Calu3 (cell line): ENCODE measurements at regions of chr1 and their contacts with region 1.

Region 1: DNA sequence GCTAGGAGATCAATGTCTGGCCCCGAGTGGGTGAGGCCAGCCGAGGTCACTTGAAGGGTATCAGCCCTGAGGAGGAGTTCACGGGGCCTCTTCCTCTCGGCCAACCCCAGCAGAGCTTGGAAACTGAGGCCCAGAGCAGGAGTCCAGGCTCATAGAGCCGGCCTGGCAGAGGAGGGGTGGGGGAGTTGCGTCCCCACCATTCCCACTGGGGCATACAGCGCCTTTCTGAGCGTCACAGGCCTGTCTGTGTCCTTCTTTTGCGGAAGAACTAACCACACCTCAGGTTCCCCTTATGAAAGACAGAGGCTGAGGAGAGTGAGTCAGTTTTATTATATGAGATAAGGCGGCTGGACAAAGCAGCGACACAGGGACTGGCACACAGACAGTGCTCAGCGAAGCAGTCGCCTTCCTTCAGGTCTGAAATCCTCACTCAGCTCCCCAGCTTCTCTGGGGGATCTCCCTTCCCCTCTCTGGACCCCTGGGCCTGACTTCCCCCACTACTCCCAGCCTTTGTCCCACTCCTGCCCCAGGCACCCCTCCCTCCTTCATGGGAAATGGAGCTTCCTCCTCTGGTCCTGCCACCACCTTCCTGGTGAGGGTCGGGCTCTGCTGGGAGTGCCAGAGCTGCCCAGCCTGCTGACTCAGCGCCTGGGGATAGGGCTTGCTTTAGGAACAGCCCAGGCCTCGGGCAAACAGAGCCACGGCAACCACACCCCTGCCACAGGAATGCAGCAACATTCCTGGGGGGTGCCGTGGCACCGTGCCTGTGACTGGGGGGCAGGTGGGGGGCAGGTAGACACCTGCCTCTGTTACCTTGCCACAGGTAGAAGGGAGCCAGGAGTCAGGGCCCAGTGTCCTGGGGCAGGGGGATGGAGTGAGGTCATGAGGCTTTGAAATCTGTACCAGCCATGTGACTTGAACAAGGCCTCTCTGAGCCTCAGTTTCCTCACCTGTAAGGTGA is 17.4 kb upstream of the EPHA2 start:
- DNase-seq: peak; percentile 96
- H3K4me3 Mint-ChIP-seq: peak overlapping the region; percentile 68
- H3K27ac Mint-ChIP-seq: peak overlapping the region; percentile 100
- H3K4me1 Mint-ChIP-seq: peaks cover 55% of the 10 kb centered on the region
- H3K27me3 Mint-ChIP-seq: no peaks in the 10 kb centered on the region
- CTCF ChIP-seq: no peak

Region 2: DNA sequence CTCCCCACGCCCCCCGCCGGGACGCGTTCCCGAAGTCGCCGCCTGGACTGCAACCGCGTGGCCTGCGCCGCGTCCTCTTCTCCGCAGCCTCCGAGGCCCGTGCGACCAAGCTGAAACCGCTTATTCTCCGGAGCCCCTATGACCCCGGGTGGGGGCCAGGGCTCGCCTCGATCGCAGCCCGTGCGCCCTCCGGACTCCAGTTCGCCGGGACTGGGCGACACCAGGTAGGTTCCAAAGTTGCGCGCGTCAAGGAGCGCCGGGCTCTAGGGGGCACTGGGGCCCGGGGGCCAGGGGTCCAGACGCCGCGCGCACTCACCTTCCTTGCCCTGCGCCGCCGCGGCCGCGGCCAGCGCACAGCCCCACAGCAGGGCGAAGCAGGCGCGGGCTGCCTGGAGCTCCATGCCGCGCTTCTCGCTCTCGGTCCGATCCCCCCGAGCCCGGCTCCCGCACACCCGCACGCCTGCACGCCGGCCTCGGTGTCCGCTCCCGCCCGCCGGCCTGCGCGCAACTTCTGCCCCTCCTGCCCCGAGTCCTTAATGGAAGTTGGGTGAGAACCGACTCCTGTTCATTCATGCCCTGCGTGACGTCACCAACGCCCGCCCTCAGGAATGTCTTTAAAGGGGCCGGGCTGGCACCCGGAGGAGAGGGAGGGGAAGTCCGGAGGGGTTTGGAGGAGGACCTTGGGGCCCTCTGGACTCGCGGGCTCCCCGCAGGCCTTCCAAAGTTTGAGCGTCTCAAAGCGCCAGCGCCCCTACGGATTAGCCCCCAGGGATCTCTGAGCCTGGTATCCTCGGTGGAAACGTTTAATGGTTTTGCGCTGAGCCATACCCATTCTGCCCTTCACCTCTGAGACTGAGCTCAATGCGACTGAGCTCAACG is 17.5 kb before region 1 on chr1 and contains the start of gene EPHA2:
- CTCF ChIA-PET with region 1: interaction called, 11 read pairs
- intact Hi-C with region 1: loop called (anchors 2 kb)
- DNase-seq: peak; percentile 90
- H3K4me3 Mint-ChIP-seq: peak within 1 kb of the TSS; percentile 84
- H3K27ac Mint-ChIP-seq: peak within 1 kb of the TSS; percentile 96
- H3K4me1 Mint-ChIP-seq: peaks cover 33% of the 10 kb centered on the region
- H3K27me3 Mint-ChIP-seq: no peaks in the 10 kb centered on the region
- CTCF ChIP-seq: no peak
- total RNA-seq, gene EPHA2: 130 and 161 TPM in 2 replicates